Transverse colon (tissue), 4 donors: ENCODE measurements at regions of chr17 and their contacts with region 1.

Region 1: GRCh38 chr17:7729816-7730215 is 12.3 kb downstream of the DNAH2 start:
- DNase-seq: no peak
- H3K4me3 ChIP-seq: no peak overlapping the region
- H3K27ac ChIP-seq: no peak overlapping the region
- H3K4me1 ChIP-seq: no peaks in the 10 kb centered on the region
- H3K27me3 ChIP-seq: peaks cover 3% of the 10 kb centered on the region
- CTCF ChIP-seq: no peak
- EP300 ChIP-seq: no peak
- POLR2A ChIP-seq: no peak

Region 2: GRCh38 chr17:7583253-7584109 is 146.3 kb before region 1 on chr17 and contains the start of gene MPDU1:
- in situ Hi-C with region 1: no loop called
- intact Hi-C with region 1: no loop called
- DNase-seq: peak; percentile 96
- H3K4me3 ChIP-seq: peak within 1 kb of the TSS; percentile 18 to 67 (median 48)
- H3K27ac ChIP-seq: peak within 1 kb of the TSS; percentile 89 to 91 (median 90)
- H3K4me1 ChIP-seq: peaks cover 35 to 69% (median 52%) of the 10 kb centered on the region in 4 donors
- H3K27me3 ChIP-seq: no peaks in the 10 kb centered on the region
- CTCF ChIP-seq: peak in 1 of 5 experiments; percentile 29
- EP300 ChIP-seq: no peak
- POLR2A ChIP-seq: peak; percentile 83
- total RNA-seq, gene MPDU1: 97.9 to 312 (median 157) TPM

Region 3: DNA sequence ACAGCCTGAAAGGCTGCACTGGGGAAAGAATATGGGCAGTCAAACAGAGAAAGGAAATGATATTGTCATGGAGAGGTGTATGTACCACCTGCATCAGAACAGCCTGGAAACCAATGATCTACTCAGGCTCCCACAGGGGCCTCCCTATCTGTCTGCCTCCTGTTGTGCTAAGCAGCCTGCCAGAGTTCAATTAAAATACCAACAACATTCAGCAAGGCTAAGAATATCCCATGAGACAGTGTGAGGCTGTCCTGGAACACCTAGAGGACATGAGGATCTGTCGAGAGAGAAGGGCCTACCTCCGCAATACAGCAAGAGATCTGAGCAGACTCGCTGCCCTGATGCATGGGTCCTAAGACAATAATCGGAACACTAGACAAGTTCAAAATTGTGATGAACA is 123.5 kb before region 1 on chr17:
- in situ Hi-C with region 1: no loop called
- intact Hi-C with region 1: no loop called
- DNase-seq: no peak
- H3K4me3 ChIP-seq: no peak overlapping the region
- H3K27ac ChIP-seq: no peak overlapping the region
- H3K4me1 ChIP-seq: peaks cover 0 to 6% (median 0%) of the 10 kb centered on the region in 4 donors
- H3K27me3 ChIP-seq: no peaks in the 10 kb centered on the region
- CTCF ChIP-seq: no peak
- EP300 ChIP-seq: no peak
- POLR2A ChIP-seq: no peak

Region 4: GRCh38 chr17:7792611-7793010 is 62.8 kb after region 1 on chr17:
- in situ Hi-C with region 1: no loop called
- intact Hi-C with region 1: loop called (anchors 2 kb)
- DNase-seq: no peak
- H3K4me3 ChIP-seq: no peak overlapping the region
- H3K27ac ChIP-seq: no peak overlapping the region
- H3K4me1 ChIP-seq: no peaks in the 10 kb centered on the region
- H3K27me3 ChIP-seq: no peaks in the 10 kb centered on the region
- CTCF ChIP-seq: no peak
- EP300 ChIP-seq: no peak
- POLR2A ChIP-seq: no peak